ENCODE measurements at regions of chr2 and their contacts with region 1.

Region 1: DNA sequence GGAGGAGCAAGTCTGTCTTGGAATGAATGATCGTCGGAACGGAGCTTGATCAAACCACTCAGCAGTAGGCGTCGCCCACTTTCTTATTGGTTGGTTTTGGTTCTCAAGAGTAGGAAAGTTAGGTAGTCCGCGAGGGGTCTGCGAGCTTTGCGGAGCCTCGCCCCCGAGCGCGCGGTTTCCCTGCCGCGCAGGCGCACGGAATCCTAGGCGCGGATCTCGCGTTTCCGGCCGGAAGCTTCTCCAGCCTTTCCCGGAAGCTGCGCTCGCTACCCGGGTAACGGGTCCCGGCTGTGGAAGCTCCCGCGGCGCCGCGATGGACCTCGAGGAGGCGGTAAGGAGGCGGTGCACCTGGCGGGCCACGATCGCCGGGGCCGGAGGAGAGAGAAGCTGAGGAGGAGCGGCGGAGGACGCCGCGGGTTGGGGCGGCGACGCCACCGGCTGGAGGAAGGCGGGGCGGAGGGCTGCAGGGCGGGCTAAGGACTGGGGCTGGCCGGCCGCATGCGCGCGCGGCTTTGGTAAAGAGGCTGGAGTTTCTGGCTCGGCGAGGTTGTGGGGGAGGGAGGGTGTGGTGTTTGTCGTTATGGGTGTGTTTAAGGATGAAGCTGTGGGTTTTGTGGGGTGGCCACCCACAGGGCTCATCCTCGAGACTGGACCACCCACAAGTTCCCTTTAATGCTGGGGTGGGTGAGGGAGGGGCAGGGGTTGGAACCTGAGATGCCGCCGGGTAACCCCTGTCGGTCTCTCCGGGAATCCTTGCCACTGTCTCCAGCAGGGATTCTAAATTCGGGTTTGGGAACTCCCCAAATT is at the start of gene TAF1B:
- DNase-seq: peak in 1 of 2 donors; percentile 87
- H3K4me3 ChIP-seq: peak within 1 kb of the TSS; percentile 92 to 93
- H3K27ac ChIP-seq: peak within 1 kb of the TSS; percentile 87 to 88
- H3K4me1 ChIP-seq: peaks cover 6 to 9% of the 10 kb centered on the region in 2 donors
- H3K27me3 ChIP-seq: no peaks in the 10 kb centered on the region
- CTCF ChIP-seq: peak in 1 of 3 experiments; percentile 11
- total RNA-seq, gene TAF1B: 58.5 TPM

Region 2: GRCh38 chr2:9799665-9800632 is 43.5 kb before region 1 on chr2:
- intact Hi-C with region 1: loop called (anchors 5 kb)
- DNase-seq: peak; percentile 43 to 92
- H3K4me3 ChIP-seq: no peak overlapping the region
- H3K27ac ChIP-seq: no peak overlapping the region
- H3K4me1 ChIP-seq: peaks cover 0 to 17% of the 10 kb centered on the region in 2 donors
- H3K27me3 ChIP-seq: no peaks in the 10 kb centered on the region
- CTCF ChIP-seq: peak; percentile 90 to 98 (median 97)

Region 3: DNA sequence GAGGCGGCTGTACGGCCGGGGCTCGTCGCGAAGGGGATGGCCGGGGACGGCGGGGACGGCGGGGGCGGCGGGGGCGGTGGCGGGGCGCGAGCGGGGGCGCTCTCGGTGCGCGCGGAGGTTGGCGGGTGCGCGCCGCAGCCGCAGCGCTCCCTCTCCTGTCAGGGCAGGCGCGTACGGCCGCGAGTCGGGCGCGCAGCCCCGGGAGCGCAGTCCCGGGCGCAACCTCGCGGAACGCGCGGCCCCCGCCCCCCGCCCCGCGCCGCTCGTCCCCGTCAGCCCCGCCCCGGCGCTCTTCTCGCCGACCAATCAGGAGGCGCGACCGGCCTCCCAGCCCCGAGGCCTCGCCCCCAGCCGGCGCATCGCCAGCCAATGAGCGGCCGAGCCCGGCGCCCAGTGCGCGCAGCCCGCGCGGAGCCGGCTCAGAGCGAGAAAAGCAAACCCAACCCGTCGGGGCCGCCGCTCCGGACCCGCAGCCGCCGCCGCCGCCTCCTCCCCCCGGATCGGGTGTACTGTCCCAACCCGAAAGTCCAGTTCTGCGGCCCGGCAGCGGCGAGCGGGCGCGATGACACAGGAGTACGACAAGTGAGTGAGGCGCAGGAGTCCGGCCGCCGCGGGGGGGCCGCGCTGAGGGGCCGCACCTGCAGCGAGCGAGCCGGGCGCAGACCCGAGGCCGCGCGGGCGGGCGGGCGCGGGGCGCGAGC is 108.0 kb after region 1 on chr2 and contains the start of gene GRHL1:
- intact Hi-C with region 1: loop called (anchors 2 kb)
- DNase-seq: peak; percentile 45 to 94
- H3K4me3 ChIP-seq: peak within 1 kb of the TSS; percentile 85 to 96
- H3K27ac ChIP-seq: no peak within 1 kb of the TSS
- H3K4me1 ChIP-seq: peaks cover 4 to 10% of the 10 kb centered on the region in 2 donors
- H3K27me3 ChIP-seq: no peaks in the 10 kb centered on the region
- CTCF ChIP-seq: no peak
- total RNA-seq, gene GRHL1: 0.43 TPM

Region 4: DNA sequence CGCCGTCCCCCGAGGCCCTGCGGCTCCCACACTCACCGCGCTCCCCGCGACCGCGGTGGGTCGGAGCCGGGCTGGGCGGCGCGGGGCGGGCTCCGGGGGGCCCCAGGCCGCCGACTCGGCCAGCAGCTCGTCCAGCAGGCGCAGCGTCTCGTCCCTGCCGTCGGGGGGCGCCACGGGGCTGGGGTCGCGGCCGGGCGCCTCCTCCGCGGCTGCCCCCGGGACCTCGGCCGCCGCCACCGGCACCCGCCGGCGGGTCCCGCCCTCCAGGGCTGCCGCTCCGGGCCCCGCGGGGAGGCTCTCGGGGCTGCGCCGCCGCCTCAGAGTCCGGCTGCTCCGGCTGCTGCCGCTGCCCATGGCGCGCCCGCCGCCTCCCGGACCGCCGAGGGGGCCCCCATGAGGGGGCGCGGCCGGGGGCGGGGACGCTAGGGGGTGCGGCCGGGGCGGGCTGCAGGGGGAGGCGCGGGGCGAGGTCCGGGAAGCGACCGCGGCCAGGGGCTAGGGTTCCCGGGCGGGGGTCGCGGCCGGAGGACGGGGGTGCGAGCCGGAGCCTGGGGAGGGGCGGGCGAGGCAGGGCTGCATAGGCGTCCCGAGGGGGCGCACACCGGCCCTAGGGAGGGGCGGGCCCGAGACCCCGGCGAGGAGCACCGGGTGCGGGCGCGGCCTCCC is 236.6 kb after region 1 on chr2 and contains the start of gene CYS1:
- intact Hi-C with region 1: loop called (anchors 10 kb)
- DNase-seq: no peak
- H3K4me3 ChIP-seq: peak within 1 kb of the TSS; percentile 84 to 95
- H3K27ac ChIP-seq: peak within 1 kb of the TSS; percentile 85 to 98
- H3K4me1 ChIP-seq: peaks cover 0 to 10% of the 10 kb centered on the region in 2 donors
- H3K27me3 ChIP-seq: no peaks in the 10 kb centered on the region
- CTCF ChIP-seq: peak in 1 of 3 experiments; percentile 57
- total RNA-seq, gene CYS1: 13.8 TPM

Region 5: GRCh38 chr2:10260130-10260529 is 416.7 kb after region 1 on chr2:
- intact Hi-C with region 1: no loop called
- DNase-seq: no peak
- H3K4me3 ChIP-seq: no peak overlapping the region
- H3K27ac ChIP-seq: no peak overlapping the region
- H3K4me1 ChIP-seq: no peaks in the 10 kb centered on the region
- H3K27me3 ChIP-seq: no peaks in the 10 kb centered on the region
- CTCF ChIP-seq: no peak

Region 6: DNA sequence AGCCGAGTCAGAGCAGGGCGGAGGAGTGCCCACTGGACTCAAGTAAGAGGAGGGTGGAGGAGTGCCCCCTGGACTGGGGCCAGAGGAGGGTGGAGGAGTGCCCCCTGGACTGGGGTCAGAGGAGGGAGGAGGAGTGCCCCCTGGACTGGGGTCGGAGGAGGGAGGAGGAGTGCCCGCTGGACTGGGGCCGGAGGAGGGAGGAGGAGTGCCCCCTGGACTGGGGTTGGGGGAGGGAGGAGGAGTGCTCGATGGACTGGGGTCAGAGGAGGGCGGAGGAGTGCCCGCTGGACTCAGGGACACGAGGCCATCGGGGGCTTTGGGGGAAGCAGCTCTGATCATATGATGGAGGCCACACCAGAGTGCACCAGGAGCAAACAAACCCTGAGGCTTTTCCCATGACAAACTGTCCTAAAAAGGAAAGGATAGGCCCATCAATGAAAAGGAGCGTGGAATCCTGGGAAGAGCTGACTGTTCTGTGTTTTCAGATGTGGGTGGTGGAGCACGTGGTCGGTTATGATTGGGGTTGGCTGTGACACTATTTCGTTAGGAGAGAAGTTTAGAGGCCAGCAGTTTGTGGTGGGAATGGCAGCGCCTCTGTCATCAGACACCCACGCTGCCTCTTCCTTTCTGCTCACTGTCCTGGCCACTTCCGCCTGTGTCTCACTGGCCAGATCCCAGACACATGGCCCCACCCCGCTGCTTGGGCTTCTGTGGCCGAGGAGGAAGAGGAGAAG is 434.8 kb after region 1 on chr2:
- intact Hi-C with region 1: no loop called
- DNase-seq: peak; percentile 63 to 84
- H3K4me3 ChIP-seq: no peak overlapping the region
- H3K27ac ChIP-seq: no peak overlapping the region
- H3K4me1 ChIP-seq: no peaks in the 10 kb centered on the region
- H3K27me3 ChIP-seq: no peaks in the 10 kb centered on the region
- CTCF ChIP-seq: no peak